Right cardiac atrium (tissue), 5 donors: ENCODE measurements at regions of chr20 and their contacts with region 1.

Region 1: GRCh38 chr20:2349818-2350508 is 30.7 kb upstream of the TGM6 start:
- DNase-seq: no peak
- ATAC-seq: no peak
- H3K4me3 ChIP-seq: no peak overlapping the region
- H3K27ac ChIP-seq: no peak overlapping the region
- H3K4me1 ChIP-seq: no peaks in the 10 kb centered on the region
- H3K27me3 ChIP-seq: no peaks in the 10 kb centered on the region

Region 2: DNA sequence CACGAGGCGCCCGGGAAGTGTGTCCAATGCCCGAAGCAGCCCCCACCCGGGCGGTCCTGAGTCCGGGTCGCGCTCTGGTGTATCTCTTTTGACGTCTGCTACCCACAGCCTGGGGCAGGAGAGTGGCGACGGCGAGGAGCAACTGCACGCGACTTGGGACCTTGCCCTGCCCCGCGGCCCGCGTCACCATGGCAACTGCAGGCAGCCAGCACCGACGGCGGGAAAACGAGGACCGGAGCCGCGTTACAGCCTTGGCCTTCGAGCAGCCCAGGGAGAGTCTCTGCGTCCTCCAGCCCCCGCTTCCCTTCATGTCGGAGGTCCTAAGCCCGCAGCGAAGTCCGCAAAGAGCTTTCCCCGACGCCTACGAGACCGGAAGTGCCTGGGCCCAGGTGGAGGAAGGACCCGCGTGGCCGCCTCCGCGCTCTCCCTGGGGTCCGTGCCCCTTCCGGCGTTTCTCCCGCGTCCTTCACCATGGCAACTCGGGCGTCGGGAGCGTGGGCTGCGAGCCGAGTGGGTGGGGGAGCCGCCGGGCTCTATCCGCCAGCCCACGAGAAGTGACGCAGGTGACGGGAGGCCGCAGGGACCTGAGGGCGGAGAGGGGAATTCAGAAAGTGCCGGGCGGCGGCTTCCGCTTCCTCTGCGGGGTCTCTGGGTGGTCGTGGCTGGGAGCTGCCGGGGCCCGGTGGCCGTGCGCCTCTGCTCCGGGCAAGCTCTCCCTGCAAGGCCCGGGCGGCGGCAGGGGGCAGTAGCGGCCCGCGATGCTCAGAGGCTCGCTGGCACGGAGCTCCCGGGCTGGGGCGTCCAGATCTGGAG is 142.8 kb before region 1 on chr20:
- intact Hi-C with region 1: loop called in 1 of 4 experiments (anchors 10 kb)
- DNase-seq: peak; percentile 79 to 91 (median 90)
- ATAC-seq: peak; percentile 91 to 94
- H3K4me3 ChIP-seq: peak overlapping the region; percentile 42
- H3K27ac ChIP-seq: no peak overlapping the region
- H3K4me1 ChIP-seq: peaks cover 2% of the 10 kb centered on the region
- H3K27me3 ChIP-seq: no peaks in the 10 kb centered on the region

Region 3: GRCh38 chr20:2421247-2421646 is 71.3 kb after region 1 on chr20:
- intact Hi-C with region 1: no loop called
- DNase-seq: no peak
- ATAC-seq: no peak
- H3K4me3 ChIP-seq: no peak overlapping the region
- H3K27ac ChIP-seq: no peak overlapping the region
- H3K4me1 ChIP-seq: no peaks in the 10 kb centered on the region
- H3K27me3 ChIP-seq: no peaks in the 10 kb centered on the region

Region 4: DNA sequence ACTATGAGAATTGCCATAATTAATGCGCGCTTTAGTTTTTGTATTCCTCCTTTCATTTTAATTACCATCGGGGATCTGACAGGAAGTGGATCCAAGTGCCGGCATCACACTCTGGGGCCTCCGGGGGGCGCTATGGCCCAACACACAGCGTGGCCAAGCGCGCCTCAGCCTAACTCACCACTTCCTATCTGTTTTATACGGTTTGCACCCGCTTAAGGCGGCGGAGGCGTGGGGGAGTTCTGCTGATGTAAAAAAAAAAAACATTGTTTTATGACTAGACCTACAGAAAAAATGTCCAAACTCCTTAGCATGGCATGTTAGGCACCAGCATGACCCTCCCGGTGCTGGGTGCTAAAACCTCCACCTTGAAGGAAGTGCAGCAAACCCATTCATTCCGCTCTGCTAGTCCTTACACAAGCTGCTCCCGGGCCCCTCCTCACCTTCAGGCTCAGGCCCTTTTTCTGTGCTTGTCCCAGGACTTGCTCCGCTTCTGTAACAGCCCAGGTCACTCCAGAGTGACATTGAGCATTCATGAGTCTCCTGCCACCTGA is 338.2 kb after region 1 on chr20:
- intact Hi-C with region 1: no loop called
- DNase-seq: peak; percentile 39 to 79 (median 77)
- ATAC-seq: peak in 1 of 2 donors; percentile 59
- H3K4me3 ChIP-seq: no peak overlapping the region
- H3K27ac ChIP-seq: no peak overlapping the region
- H3K4me1 ChIP-seq: no peaks in the 10 kb centered on the region
- H3K27me3 ChIP-seq: no peaks in the 10 kb centered on the region